GM12878 (cell line): ENCODE measurements at regions of chr14 and their contacts with region 1.

Region 1: DNA sequence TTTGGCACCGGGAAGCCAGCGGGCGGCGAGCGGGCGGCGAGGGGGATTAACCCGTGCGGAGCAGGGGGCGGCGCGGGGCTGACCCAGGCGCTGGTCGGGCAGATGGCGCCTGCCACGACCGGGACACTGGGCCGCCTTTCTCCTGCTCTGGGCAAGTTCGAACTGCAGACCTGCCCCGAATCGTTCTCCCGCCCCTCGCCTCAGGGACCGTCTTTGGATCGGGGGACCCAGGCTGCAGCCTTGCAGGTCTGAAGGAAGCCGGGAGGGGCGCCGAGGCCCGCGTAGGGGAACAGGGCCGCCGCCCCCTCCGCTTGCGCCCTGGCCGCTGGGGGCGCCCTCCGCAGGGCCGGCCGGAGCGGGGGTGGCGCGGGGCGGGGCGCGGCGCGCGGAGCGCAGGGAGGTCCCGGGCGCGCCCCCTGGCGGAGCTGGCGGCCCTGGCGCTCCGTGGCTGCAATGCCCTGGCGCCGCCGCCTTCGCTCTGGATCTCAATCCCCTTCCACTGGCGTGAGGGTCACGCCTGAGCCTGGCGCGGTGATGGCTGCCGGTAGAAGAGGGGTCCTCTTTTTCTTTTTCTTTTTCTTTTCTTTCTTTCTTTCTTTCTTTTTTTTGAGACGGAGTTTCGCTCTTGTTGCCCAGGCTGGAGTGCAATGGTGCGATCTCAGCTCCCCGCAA is 449 bp upstream of the LTBP2 start:
- DNase-seq: no peak
- ATAC-seq: peak; percentile 87
- H3K4me3 ChIP-seq: peak overlapping the region; percentile 63
- H3K27ac ChIP-seq: no peak overlapping the region
- H3K4me1 ChIP-seq: peaks cover 15% of the 10 kb centered on the region
- H3K27me3 ChIP-seq: peaks cover 0 to 1% of the 10 kb centered on the region in 2 experiments; a peak in 2 of 4 replicates
- CTCF ChIP-seq: peak; percentile 59 to 65 (median 64); a peak in 5 of 6 replicates
- EP300 ChIP-seq: no peak
- POLR2A ChIP-seq: no peak
- RAD21 ChIP-seq: peak; percentile 40

Region 2: GRCh38 chr14:74627076-74627475 is 14.6 kb after region 1 on chr14:
- CTCF ChIA-PET with region 1: interaction called, 12 read pairs
- POLR2A ChIA-PET with region 1: no interaction called
- RAD21 ChIA-PET with region 1: no interaction called
- SMC1A ChIA-PET with region 1: no interaction called
- in situ Hi-C with region 1: no loop called
- intact Hi-C with region 1: no loop called
- DNase-seq: no peak
- ATAC-seq: peak; percentile 40
- H3K4me3 ChIP-seq: no peak overlapping the region
- H3K27ac ChIP-seq: no peak overlapping the region
- H3K4me1 ChIP-seq: no peaks in the 10 kb centered on the region
- H3K27me3 ChIP-seq: no peaks in the 10 kb centered on the region
- CTCF ChIP-seq: no peak
- EP300 ChIP-seq: no peak
- POLR2A ChIP-seq: no peak
- RAD21 ChIP-seq: no peak

Region 3: DNA sequence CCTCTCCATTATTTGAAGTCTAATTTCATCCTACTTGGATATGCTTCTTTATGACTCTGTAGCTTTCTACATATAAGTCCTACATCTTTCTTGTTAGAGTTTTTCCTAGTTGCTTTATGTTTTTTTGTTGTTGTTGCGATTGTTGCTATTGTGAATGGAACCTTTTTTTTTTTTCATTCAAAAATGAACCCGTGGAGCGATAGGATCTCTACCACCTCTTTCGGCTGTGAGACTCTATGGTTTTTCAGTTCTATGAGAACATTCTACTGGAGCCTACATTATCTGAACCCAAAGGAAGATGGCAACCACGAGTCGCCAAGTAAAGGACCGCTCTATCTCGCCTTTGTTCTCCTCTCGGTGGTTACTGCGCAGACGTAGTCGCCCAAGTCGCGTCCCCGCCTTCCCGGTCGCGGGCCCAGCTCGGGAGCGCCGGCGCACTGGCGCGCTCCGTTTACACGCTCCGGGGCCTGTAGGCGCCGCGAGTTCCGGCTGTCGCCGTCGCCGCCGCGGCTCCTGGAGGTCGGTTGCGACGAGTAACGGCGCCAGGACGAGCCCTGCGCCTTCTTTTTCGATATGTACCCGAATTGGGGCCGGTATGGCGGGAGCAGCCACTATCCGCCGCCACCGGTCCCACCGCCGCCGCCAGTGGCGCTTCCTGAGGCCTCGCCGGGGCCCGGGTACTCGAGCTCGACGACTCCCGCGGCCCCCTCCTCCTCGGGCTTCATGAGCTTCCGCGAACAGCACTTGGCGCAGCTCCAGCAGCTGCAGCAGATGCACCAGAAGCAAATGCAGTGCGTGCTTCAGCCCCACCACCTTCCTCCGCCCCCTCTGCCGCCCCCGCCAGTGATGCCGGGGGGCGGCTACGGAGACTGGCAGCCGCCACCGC is 150.7 kb after region 1 on chr14 and contains the start of gene YLPM1:
- CTCF ChIA-PET with region 1: interaction called, 10 read pairs
- POLR2A ChIA-PET with region 1: no interaction called
- RAD21 ChIA-PET with region 1: interaction called, 6 read pairs
- SMC1A ChIA-PET with region 1: interaction called, 4 read pairs
- in situ Hi-C with region 1: no loop called
- intact Hi-C with region 1: loop called (anchors 2 kb)
- DNase-seq: peak; percentile 97
- ATAC-seq: peak; percentile 93
- H3K4me3 ChIP-seq: peak within 1 kb of the TSS; percentile 94
- H3K27ac ChIP-seq: peak within 1 kb of the TSS; percentile 76
- H3K4me1 ChIP-seq: no peaks in the 10 kb centered on the region
- H3K27me3 ChIP-seq: no peaks in the 10 kb centered on the region
- CTCF ChIP-seq: peak; percentile 38 to 80 (median 54); a peak in 5 of 6 replicates
- EP300 ChIP-seq: 0 out of 4 replicates have a peak, but pooled peaks have one; percentile 6 to 34
- POLR2A ChIP-seq: peak; percentile 97
- RAD21 ChIP-seq: no peak
- polyA plus RNA-seq, gene YLPM1: 11.1 to 15.1 TPM

Region 4: GRCh38 chr14:74804219-74804826 is 191.8 kb after region 1 on chr14:
- CTCF ChIA-PET with region 1: interaction called, 34 read pairs
- POLR2A ChIA-PET with region 1: no interaction called
- RAD21 ChIA-PET with region 1: interaction called, 18 read pairs
- SMC1A ChIA-PET with region 1: interaction called, 10 read pairs
- in situ Hi-C with region 1: no loop called
- intact Hi-C with region 1: loop called (anchors 1 kb)
- DNase-seq: no peak
- ATAC-seq: peak; percentile 69
- H3K4me3 ChIP-seq: no peak overlapping the region
- H3K27ac ChIP-seq: no peak overlapping the region
- H3K4me1 ChIP-seq: no peaks in the 10 kb centered on the region
- H3K27me3 ChIP-seq: no peaks in the 10 kb centered on the region
- CTCF ChIP-seq: peak; percentile 55 to 64 (median 61); a peak in 5 of 6 replicates
- EP300 ChIP-seq: no peak
- POLR2A ChIP-seq: no peak
- RAD21 ChIP-seq: peak; percentile 61

Region 5: DNA sequence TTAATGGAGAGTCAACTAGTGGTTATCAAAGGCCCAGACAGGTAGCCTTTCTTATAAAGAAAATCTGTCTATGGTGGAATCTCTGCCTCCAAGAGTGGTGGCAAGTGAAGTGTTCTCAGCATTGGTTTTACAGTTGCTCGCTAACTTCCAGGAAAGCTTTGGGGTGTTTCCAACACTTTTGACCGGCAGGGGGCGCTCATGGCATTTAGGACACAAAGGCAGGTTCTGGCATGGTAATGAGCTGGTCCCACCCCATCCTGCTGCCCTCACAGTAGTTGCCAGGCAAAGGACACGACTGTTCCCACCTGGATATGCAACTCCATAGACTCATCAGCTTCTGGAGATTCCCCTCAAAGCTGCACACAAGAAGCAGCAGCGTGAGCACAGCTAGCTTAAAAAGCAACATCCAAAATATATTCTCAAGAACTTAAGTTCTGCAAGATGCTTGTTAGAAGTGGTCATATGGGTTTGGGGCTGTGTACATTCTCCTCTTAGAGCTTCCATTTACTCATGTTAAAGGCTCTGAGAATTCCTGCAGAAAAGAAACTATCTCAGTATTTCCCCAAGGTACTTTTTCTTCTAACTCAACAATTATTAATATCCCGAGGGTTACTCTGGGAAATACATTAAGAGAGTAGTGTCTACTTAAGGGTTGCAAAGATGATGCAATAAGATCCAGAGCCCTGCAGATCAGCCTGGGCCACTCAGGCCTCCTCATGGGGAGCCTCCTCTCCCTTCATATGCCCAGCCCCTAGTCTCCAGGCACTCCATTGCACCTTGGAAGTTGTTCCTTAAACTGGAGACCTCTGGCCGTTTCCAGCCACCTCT is 248.6 kb after region 1 on chr14:
- CTCF ChIA-PET with region 1: interaction called, 20 read pairs
- POLR2A ChIA-PET with region 1: no interaction called
- RAD21 ChIA-PET with region 1: interaction called, 11 read pairs
- SMC1A ChIA-PET with region 1: interaction called, 9 read pairs
- in situ Hi-C with region 1: no loop called
- intact Hi-C with region 1: no loop called
- DNase-seq: no peak
- ATAC-seq: peak; percentile 97
- H3K4me3 ChIP-seq: no peak overlapping the region
- H3K27ac ChIP-seq: no peak overlapping the region
- H3K4me1 ChIP-seq: no peaks in the 10 kb centered on the region
- H3K27me3 ChIP-seq: no peaks in the 10 kb centered on the region
- CTCF ChIP-seq: peak; percentile 82 to 94 (median 88)
- EP300 ChIP-seq: no peak
- POLR2A ChIP-seq: no peak
- RAD21 ChIP-seq: peak; percentile 93